ENCODE measurements at regions of chr4 and their contacts with region 1.

Region 1: GRCh38 chr4:56977321-56978012 is at the start of gene NOA1:
- DNase-seq: peak; percentile 98
- total RNA-seq, gene NOA1: 8.4 TPM

Region 2: DNA sequence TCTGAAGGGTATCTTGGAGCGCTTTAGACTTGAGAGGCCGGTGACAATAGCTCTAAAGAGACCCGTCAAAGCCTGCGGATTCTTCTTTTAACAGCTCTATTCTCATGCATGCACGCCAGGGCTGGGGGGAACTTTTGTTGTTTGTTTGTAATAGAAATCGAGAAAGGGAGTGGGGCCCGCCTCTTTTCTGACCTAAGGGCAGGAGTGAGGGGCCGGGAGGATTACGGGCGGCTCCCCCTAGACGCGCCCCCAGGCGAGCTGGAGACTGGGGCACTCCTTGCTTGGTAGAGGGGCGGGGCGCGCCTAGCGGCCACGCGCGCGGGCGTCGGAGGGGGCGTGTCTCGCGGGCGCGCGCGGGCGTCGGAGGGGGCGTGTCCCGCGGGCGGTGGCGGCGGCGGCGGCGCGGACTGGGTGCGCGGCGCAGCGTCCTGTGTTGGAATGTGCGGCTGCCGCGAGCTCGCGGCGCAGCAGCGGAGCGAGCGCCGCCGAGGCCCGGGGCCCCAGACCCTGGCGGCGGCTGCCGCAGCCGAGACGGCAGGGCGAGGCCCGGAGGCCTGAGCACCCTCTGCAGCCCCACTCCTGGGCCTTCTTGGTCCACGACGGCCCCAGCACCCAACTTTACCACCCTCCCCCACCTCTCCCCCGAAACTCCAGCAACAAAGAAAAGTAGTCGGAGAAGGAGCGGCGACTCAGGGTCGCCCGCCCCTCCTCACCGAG is 69.8 kb before region 1 on chr4 and contains the start of gene REST:
- intact Hi-C with region 1: loop called (anchors 1 kb)
- DNase-seq: peak; percentile 91
- total RNA-seq, gene REST: 33.9 TPM

Region 3: DNA sequence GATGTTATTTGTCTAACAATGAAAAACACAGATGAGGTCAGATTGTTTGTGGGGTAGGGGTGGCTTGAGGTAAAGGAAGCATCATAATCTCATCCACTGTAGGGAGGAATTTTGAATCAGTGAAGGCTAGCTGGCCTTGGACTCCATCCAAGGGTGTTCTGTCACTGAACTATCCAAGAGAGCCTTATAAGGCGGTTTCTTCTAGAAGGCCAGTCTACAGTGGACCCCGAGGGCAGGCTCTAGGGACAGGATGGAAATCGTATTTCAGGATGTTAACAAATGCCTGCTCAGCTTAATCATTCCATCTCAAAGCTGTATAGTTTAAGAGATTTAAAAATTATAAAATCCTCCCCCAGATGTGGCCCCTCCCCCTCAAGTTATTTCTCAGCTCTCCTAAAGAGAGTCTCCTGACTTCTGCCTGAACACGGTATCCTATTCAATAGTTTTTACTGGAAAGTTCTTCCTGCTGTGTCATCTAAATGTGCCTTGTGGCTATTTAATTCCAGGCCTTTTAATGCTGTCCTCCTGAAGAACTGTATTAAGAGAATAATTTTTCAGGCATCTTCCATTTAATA is 124.7 kb after region 1 on chr4:
- intact Hi-C with region 1: loop called (anchors 5 kb)
- DNase-seq: no peak